AG04450 (cell line): ENCODE measurements at regions of chr18 and their contacts with region 1.

Region 1: DNA sequence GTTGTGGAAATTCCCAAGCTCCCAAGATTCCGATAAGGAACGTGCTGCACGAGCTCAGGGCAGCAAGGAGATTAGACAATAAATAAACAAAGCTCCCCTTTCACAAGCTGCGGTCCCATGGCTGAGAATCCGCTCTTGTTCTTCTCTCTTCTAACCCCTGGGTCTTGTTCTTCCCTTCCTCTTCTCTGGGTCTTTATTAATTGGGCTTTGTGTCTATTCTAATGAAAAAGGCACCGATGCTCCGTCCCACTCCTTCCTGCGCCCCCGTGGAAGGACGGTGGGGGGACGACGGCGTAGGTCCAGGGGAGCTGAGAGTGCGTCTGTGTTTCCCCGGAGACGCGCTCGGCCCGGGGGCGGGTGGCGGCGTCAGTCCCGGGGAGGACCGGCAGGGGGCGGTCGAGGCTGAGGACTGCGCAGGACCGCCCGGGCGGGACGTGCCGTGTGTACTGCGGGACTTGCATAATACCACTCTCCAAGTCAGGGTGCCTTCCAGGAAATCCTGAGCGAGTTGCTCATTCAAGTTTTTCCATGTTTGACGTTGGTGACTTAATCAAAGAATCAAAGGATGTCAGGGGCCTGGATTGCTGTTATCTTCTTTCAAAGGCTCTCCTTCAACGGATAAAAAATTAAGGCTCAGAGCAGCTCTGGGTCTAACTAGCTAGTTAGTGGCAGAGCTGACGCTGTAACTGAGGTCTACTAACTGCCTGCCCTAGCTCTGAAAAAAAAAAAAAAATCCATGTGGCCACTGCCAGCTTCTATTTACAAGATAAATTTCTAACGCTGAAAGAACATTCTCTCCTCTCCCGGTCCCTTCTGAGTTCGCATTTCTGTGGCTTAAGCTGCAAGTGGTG is 321.4 kb downstream of the TGIF1 start:
- DNase-seq: peak; percentile 88
- H3K4me3 ChIP-seq: peak overlapping the region; percentile 52
- H3K27ac ChIP-seq: peak overlapping the region; percentile 77
- H3K27me3 ChIP-seq: no peaks in the 10 kb centered on the region
- CTCF ChIP-seq: peak; percentile 85

Region 2: DNA sequence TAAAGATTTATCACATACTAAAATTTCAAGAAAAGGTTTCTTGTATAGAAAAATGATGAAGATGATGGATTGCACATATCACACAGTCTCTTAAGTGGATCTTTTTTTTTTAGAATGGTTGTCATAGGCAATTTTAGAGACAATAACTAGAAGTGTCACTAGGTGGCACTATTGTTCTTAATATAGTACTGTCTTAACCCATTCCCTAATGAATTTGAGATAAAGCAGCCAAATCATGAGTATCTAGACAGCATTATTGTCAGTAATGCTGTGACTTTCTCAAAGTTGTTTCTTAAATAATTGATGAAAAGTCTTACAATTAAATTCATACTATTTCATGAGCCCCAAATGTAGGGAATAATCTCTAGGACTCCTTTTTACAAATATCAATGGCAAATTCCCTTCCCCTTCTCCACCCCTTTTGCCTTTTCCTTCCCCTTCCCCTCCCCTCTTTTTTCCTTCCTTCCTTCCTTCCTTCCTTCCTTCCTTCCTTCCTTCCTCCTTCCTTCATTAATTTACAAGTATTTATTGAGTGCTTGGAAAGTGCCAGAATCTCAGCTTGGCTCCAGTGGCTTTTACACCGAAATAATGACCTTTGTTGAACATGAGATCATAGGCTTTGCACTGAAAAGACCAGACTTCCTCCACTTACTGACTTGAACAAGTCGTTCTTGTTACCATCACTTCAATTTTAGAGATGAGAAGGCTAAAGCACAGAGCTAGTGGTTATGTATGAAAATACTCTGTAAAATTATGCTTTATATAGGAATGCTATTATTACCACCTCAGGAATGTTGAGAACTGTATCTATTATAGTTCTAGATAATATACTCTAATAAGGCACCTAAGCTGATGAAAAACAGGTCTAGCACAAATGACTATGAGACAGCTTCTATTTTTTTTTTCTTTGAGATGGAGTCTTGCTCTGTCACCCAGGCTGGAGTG is 489.6 kb before region 1 on chr18:
- CTCF ChIA-PET with region 1: interaction called, 16 read pairs
- POLR2A ChIA-PET with region 1: no interaction called
- DNase-seq: no peak
- H3K4me3 ChIP-seq: no peak overlapping the region
- H3K27ac ChIP-seq: no peak overlapping the region
- H3K27me3 ChIP-seq: no peaks in the 10 kb centered on the region
- CTCF ChIP-seq: peak; percentile 51

Region 3: DNA sequence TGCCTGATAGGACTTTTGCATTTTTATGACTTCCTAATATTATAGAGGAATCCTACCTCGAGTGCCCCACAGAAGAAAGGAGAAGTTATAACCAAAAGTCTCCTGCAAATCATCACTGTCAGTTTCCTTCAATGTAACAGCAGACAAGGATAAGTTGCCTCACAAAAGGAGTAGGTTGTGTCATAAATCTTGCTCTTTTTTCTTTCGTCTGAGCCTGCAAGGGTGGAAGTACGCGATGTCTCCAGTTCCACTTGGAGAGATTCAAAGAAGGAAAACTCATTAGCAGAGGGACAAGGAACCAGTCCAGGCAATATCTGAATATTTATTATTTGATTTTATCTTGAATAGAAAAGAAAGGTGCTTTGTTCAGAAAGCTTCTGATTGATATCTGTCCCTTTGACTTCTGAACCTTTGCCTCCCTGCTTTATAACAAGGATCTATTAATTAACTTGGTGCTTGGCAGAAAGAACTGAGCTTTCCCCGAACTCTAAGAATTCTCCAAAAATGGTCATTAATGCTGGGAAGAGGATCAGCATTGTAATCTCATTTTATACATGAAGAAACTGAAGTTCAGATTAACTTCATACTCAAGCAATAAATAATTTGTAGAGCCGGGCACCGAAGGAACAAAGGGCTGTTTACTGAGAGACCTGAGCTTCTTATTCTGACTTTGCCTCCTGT is 48.9 kb before region 1 on chr18:
- CTCF ChIA-PET with region 1: interaction called, 16 read pairs
- POLR2A ChIA-PET with region 1: interaction called, 4 read pairs
- DNase-seq: no peak
- H3K4me3 ChIP-seq: no peak overlapping the region
- H3K27ac ChIP-seq: peak overlapping the region; percentile 47
- H3K27me3 ChIP-seq: no peaks in the 10 kb centered on the region
- CTCF ChIP-seq: no peak

Region 4: DNA sequence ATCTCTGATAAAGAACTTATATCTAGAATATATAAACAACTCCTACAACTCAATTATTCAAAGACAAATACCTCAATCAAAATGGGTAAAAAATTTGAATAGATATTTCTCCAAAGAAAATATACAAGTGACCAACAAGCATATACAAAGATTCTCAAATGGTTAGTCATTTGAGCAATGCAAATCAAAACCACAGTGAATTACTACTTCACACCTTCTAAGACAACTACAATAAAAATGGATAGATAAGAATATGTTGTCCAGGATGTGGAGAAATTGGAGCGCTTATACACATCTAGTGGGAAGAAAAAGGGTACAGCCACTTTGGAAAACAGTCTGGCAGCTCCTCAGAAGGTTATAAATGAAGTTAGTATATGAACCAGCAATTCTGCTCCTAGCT is 11.6 kb after region 1 on chr18:
- CTCF ChIA-PET with region 1: interaction called, 27 read pairs
- POLR2A ChIA-PET with region 1: no interaction called
- DNase-seq: no peak
- H3K4me3 ChIP-seq: no peak overlapping the region
- H3K27ac ChIP-seq: no peak overlapping the region
- H3K27me3 ChIP-seq: no peaks in the 10 kb centered on the region
- CTCF ChIP-seq: no peak

Region 5: GRCh38 chr18:3816610-3817363 is 45.4 kb after region 1 on chr18:
- CTCF ChIA-PET with region 1: interaction called, 15 read pairs
- POLR2A ChIA-PET with region 1: interaction called, 3 read pairs
- DNase-seq: peak; percentile 93
- H3K4me3 ChIP-seq: no peak overlapping the region
- H3K27ac ChIP-seq: peak overlapping the region; percentile 71
- H3K27me3 ChIP-seq: no peaks in the 10 kb centered on the region
- CTCF ChIP-seq: no peak

Region 6: DNA sequence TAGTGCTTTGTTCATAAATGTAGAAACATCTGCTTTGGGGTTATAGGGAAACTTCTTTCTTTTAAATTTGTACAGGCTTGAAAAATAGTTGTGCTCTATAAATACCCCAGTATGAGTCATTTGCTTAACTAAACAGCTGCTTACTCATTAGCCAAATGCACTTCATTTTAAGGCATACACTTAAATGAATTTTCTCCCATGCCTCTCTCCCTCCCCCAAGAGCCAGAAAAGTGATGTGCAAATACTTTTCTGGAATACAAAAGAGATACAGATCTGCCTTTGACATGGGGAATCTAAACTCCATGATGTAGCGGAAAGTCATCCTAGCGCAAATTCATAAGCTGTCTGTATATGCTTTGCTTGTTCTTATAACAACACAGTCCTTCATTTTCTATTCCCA is 214.3 kb after region 1 on chr18:
- CTCF ChIA-PET with region 1: interaction called, 16 read pairs
- POLR2A ChIA-PET with region 1: no interaction called
- DNase-seq: peak; percentile 59
- H3K4me3 ChIP-seq: no peak overlapping the region
- H3K27ac ChIP-seq: peak overlapping the region; percentile 78
- H3K27me3 ChIP-seq: no peaks in the 10 kb centered on the region
- CTCF ChIP-seq: peak; percentile 19; the same call in 1 of the 2 replicates